Posterior cingulate gyrus (tissue), 11 donors: ENCODE measurements at regions of chr22 and their contacts with region 1.

Region 1: DNA sequence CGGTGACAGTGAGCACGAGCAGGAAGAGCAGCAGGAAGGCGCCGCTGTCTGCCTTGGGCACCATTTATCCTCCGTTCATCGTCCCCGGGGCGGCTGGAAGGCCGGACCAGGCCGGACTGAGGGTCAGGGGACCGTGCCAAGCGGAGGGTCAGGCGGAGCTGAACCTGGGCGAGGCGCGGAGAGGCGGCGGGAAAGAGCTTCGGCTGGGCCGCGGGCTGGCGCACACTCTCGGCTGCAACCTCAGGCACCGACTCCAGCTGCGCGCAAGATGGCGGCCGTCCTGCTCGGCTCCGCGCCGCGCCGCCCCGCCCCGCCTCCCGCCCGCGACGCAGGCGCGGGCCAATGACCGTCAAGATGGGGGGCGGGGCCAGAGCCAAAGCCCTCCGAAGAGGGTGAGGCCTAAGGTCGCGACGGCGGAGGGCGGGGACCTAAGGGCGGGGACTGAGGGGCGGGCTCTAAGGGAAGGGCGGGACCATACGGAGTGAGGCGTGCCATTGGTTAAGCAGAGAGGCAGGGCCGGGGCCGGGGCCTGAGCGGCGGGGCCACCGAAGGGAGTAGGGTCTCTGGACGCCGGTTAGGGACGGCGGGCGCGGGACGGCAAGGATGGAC is at the start of gene DGCR2:
- DNase-seq: peak; percentile 93 to 99 (median 98)

Region 2: GRCh38 chr22:19143967-19144400 is 21.7 kb after region 1 on chr22:
- intact Hi-C with region 1: loop called (anchors 2 kb)
- DNase-seq: no peak